T-cell (primary cell): ENCODE measurements at regions of chr6 and their contacts with region 1.

Region 1: GRCh38 chr6:25017932-25018567 is 82.3 kb upstream of the RIPOR2 start:
- DNase-seq: peak; percentile 55 to 92 (median 80)
- ATAC-seq: peak; percentile 76 to 95 (median 91)
- H3K4me3 ChIP-seq: no peak overlapping the region
- H3K4me3 Mint-ChIP-seq: peak overlapping the region in 2 of 3 donors; percentile 34 to 63
- H3K27ac ChIP-seq: peak overlapping the region; percentile 33
- H3K27ac Mint-ChIP-seq: peak overlapping the region; percentile 87 to 91
- H3K4me1 ChIP-seq: peaks cover 17 to 24% of the 10 kb centered on the region in 2 experiments
- H3K4me1 Mint-ChIP-seq: peaks cover 39 to 48% (median 44%) of the 10 kb centered on the region in 3 donors
- H3K27me3 ChIP-seq: no peaks in the 10 kb centered on the region
- H3K27me3 Mint-ChIP-seq: no peaks in the 10 kb centered on the region

Region 2: GRCh38 chr6:24537771-24538385 is 480.2 kb before region 1 on chr6:
- CTCF ChIA-PET with region 1: no interaction called
- POLR2A ChIA-PET with region 1: no interaction called
- DNase-seq: no peak
- ATAC-seq: no peak
- H3K4me3 ChIP-seq: no peak overlapping the region
- H3K4me3 Mint-ChIP-seq: no peak overlapping the region
- H3K27ac ChIP-seq: no peak overlapping the region
- H3K27ac Mint-ChIP-seq: no peak overlapping the region
- H3K4me1 ChIP-seq: no peaks in the 10 kb centered on the region
- H3K4me1 Mint-ChIP-seq: no peaks in the 10 kb centered on the region
- H3K27me3 ChIP-seq: no peaks in the 10 kb centered on the region
- H3K27me3 Mint-ChIP-seq: no peaks in the 10 kb centered on the region

Region 3: DNA sequence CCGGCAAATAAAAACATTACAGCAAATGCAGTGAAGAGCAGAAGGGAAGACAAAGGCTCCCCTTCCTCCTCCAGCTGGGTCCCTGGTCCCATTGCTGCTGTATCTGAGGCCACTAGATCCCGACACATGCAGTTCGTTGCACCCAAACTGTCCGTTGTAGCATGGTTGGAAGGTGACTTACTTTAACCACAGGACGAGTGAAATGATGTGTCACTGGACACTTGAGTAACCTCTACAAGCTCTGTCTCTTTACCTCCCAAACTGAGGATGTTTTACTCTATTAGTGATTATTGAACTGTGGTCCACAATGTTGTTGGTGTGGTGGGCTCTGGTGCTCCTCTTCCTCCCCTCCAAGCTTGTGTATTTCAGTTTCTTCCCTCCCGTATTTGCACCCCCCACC is 173.1 kb before region 1 on chr6:
- CTCF ChIA-PET with region 1: interaction called, 3 to 11 read pairs
- POLR2A ChIA-PET with region 1: no interaction called
- DNase-seq: no peak
- ATAC-seq: no peak
- H3K4me3 ChIP-seq: no peak overlapping the region
- H3K4me3 Mint-ChIP-seq: no peak overlapping the region
- H3K27ac ChIP-seq: peak overlapping the region; percentile 42
- H3K27ac Mint-ChIP-seq: peak overlapping the region; percentile 75 to 78
- H3K4me1 ChIP-seq: peaks cover 20 to 50% of the 10 kb centered on the region in 2 experiments
- H3K4me1 Mint-ChIP-seq: peaks cover 79 to 88% (median 88%) of the 10 kb centered on the region in 3 donors
- H3K27me3 ChIP-seq: no peaks in the 10 kb centered on the region
- H3K27me3 Mint-ChIP-seq: no peaks in the 10 kb centered on the region

Region 4: DNA sequence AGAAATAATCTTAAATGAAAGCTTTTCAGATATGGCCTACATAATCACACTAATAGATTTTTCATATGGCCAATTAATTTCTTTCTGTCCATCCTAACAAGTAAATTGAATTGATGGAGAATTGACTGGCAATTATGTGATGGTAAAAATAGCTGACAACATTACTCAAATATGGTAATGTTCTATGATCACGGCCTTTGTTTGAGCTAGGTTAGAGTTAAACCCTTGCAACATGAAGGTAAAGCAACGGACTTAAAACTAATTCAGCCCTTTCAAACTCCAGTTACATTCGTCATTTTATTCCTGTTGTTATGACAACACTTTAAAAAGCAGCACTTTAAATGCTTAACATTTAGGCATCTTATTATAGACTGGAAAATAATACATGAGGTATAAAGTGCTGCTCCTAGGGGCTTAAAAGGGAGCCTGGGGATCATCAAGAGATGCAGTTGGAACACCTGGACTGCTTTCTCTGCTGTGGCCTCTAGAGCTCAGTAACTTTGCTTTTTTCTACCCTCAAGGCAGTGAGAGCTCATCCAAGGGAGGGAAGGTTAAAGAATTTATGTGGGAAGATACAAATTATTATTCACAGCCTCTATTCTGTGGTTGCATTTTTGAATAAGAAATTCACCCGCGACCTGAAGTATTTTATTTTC is 129.2 kb before region 1 on chr6:
- CTCF ChIA-PET with region 1: interaction called in 1 of 2 experiments, 16 read pairs
- POLR2A ChIA-PET with region 1: interaction called in 1 of 2 experiments, 3 read pairs
- DNase-seq: no peak
- ATAC-seq: peak in 1 of 4 experiments; percentile 62
- H3K4me3 ChIP-seq: no peak overlapping the region
- H3K4me3 Mint-ChIP-seq: peak overlapping the region in 2 of 3 donors; percentile 41 to 56
- H3K27ac ChIP-seq: peak overlapping the region; percentile 28
- H3K27ac Mint-ChIP-seq: peak overlapping the region; percentile 56 to 88
- H3K4me1 ChIP-seq: peaks cover 45 to 53% of the 10 kb centered on the region in 2 experiments
- H3K4me1 Mint-ChIP-seq: peaks cover 84 to 95% (median 87%) of the 10 kb centered on the region in 3 donors
- H3K27me3 ChIP-seq: no peaks in the 10 kb centered on the region
- H3K27me3 Mint-ChIP-seq: no peaks in the 10 kb centered on the region

Region 5: GRCh38 chr6:24910961-24911712 is 106.9 kb before region 1 on chr6:
- CTCF ChIA-PET with region 1: interaction called in 1 of 2 experiments, 31 read pairs
- POLR2A ChIA-PET with region 1: no interaction called
- DNase-seq: peak in 30 of 35 experiments; percentile 29 to 72 (median 48)
- ATAC-seq: peak; percentile 32 to 50 (median 36)
- H3K4me3 ChIP-seq: peak overlapping the region; percentile 57 to 60
- H3K4me3 Mint-ChIP-seq: peak overlapping the region; percentile 88 to 93 (median 90)
- H3K27ac ChIP-seq: peak overlapping the region; percentile 79
- H3K27ac Mint-ChIP-seq: peak overlapping the region; percentile 98 to 99
- H3K4me1 ChIP-seq: peaks cover 74 to 87% of the 10 kb centered on the region in 2 experiments
- H3K4me1 Mint-ChIP-seq: peaks cover 96 to 100% (median 97%) of the 10 kb centered on the region in 3 donors
- H3K27me3 ChIP-seq: no peaks in the 10 kb centered on the region
- H3K27me3 Mint-ChIP-seq: no peaks in the 10 kb centered on the region

Region 6: DNA sequence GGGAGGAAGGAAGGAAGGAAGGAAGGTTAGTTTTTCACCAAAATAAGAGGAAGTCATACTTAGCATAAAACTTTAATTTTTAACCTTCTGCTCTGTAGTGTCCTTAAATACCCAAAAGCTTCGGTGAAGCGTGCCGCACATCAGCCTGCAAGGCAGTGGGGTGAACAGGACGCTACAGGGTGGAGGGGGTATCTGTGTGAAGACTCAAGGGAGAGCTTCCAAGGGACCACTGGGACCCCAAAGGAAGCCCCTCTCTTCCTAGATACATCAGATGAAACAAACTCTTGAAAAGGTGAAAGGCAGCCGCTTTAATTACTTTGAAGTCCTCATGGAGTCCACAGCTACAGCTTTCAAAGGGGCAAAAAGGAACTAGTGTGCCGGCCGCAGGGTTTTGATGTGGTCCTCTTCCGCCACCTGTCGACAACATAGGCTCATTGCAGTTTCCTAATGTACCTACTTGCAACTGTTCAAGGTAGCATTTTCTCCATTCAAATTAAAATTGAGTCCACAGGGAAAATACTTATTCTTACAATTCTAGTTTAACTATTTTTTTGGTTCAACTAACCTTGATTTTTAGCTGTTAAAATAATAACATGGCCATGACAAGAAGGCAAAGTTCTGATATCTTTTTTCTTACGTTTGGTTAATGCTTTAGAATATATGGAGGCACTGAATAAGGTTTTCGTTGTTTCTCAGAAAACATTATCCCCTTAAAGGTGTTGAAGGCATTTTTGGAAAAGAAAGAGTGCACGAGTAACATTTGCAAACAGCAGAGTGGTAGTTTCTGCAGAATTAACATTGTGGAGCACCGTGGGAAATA is 52.7 kb after region 1 on chr6:
- CTCF ChIA-PET with region 1: interaction called in 1 of 2 experiments, 24 read pairs
- POLR2A ChIA-PET with region 1: no interaction called
- DNase-seq: peak; percentile 62 to 93 (median 76)
- ATAC-seq: peak; percentile 91 to 94 (median 94)
- H3K4me3 ChIP-seq: no peak overlapping the region
- H3K4me3 Mint-ChIP-seq: peak overlapping the region; percentile 28 to 59 (median 56)
- H3K27ac ChIP-seq: peak overlapping the region; percentile 61
- H3K27ac Mint-ChIP-seq: peak overlapping the region; percentile 87 to 89
- H3K4me1 ChIP-seq: peaks cover 0 to 5% of the 10 kb centered on the region in 2 experiments
- H3K4me1 Mint-ChIP-seq: peaks cover 4 to 9% (median 5%) of the 10 kb centered on the region in 3 donors
- H3K27me3 ChIP-seq: no peaks in the 10 kb centered on the region
- H3K27me3 Mint-ChIP-seq: no peaks in the 10 kb centered on the region